ENCODE measurements at regions of chr14 and their contacts with region 1.

Region 1: GRCh38 chr14:105314287-105315200 is at the start of gene PACS2:
- DNase-seq: no peak
- ATAC-seq: peak; percentile 76
- H3K4me3 ChIP-seq: peak within 1 kb of the TSS; percentile 80
- H3K27ac ChIP-seq: no peak within 1 kb of the TSS
- H3K4me1 ChIP-seq: peaks cover 10% of the 10 kb centered on the region
- H3K27me3 ChIP-seq: no peaks in the 10 kb centered on the region
- CTCF ChIP-seq: no peak
- EP300 ChIP-seq: no peak
- POLR2A ChIP-seq: no peak; the same call in none of the 2 replicates
- RAD21 ChIP-seq: no peak
- polyA plus RNA-seq, gene PACS2: 0.21 to 0.91 TPM

Region 2: DNA sequence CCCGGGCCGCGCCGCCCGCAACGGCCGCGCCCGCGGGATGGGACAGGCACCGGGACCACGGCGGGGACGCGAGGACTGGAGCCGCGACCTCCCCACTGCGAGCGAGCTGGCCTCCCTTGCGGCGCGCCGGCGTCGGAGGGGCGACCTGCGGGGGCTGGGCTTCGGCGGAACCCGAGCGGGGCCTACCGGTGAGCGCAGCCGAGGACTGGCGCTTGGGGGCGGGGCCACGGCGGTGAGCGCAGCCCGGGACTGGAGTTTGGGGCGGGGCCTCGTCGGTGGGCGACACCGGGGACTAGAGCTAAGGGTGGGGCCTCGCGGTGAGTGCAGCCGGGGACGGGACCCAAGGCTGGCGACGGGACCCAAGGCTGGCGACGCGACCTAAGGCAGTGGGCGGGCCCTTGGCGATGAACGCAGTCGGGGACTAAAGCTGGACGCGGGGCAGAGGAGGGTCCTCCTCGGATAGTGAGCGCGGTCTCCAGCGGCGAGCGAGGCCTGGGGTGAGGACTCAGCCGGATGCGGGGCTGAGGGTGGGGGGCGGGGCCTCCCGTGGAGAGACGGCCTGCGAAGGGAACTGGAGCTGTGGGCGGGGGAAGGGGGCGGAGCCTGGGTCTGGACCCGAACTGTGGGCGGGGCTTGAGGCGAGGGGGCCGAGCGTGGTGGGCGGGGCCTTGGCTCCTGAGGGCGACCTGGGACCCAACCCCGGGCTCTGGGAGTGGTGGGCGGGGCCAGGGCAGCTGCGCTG is 13.6 kb before region 1 on chr14 and contains the start of gene BRF1:
- CTCF ChIA-PET with region 1: interaction called, 4 read pairs
- POLR2A ChIA-PET with region 1: interaction called, 8 read pairs
- RAD21 ChIA-PET with region 1: interaction called, 13 read pairs
- SMC1A ChIA-PET with region 1: interaction called, 5 read pairs
- in situ Hi-C with region 1: no loop called
- intact Hi-C with region 1: no loop called
- DNase-seq: peak; percentile 78
- ATAC-seq: peak; percentile 92
- H3K4me3 ChIP-seq: peak within 1 kb of the TSS; percentile 88
- H3K27ac ChIP-seq: peak within 1 kb of the TSS; percentile 82
- H3K4me1 ChIP-seq: peaks cover 3% of the 10 kb centered on the region
- H3K27me3 ChIP-seq: no peaks in the 10 kb centered on the region
- CTCF ChIP-seq: no peak
- EP300 ChIP-seq: no peak; a peak in 1 of 4 replicates
- POLR2A ChIP-seq: peak; percentile 90
- RAD21 ChIP-seq: no peak
- polyA plus RNA-seq, gene BRF1: 0.21 to 0.58 TPM